Activated CD4-positive, alpha-beta memory T cell treated with anti-CD3 and anti-CD28 coated beads for 36 hours (primary cell): ENCODE measurements at regions of chr1 and their contacts with region 1.

Region 1: GRCh38 chr1:116769561-116769977 is 15.3 kb downstream of the CD2 start:
- DNase-seq: peak; percentile 85
- H3K4me3 Mint-ChIP-seq: peak overlapping the region; percentile 99
- H3K27ac Mint-ChIP-seq: peak overlapping the region; percentile 99
- H3K4me1 Mint-ChIP-seq: peaks cover 95% of the 10 kb centered on the region
- H3K27me3 Mint-ChIP-seq: peaks cover 2% of the 10 kb centered on the region

Region 2: GRCh38 chr1:116472431-116472961 is 297.1 kb before region 1 on chr1:
- CTCF ChIA-PET with region 1: no interaction called
- POLR2A ChIA-PET with region 1: no interaction called
- intact Hi-C with region 1: no loop called
- DNase-seq: no peak
- H3K4me3 Mint-ChIP-seq: no peak overlapping the region
- H3K27ac Mint-ChIP-seq: no peak overlapping the region
- H3K4me1 Mint-ChIP-seq: no peaks in the 10 kb centered on the region
- H3K27me3 Mint-ChIP-seq: no peaks in the 10 kb centered on the region

Region 3: GRCh38 chr1:116498789-116499628 is 270.6 kb before region 1 on chr1:
- CTCF ChIA-PET with region 1: no interaction called
- POLR2A ChIA-PET with region 1: no interaction called
- intact Hi-C with region 1: no loop called
- DNase-seq: peak; percentile 53
- H3K4me3 Mint-ChIP-seq: no peak overlapping the region
- H3K27ac Mint-ChIP-seq: no peak overlapping the region
- H3K4me1 Mint-ChIP-seq: peaks cover 27% of the 10 kb centered on the region
- H3K27me3 Mint-ChIP-seq: no peaks in the 10 kb centered on the region

Region 4: DNA sequence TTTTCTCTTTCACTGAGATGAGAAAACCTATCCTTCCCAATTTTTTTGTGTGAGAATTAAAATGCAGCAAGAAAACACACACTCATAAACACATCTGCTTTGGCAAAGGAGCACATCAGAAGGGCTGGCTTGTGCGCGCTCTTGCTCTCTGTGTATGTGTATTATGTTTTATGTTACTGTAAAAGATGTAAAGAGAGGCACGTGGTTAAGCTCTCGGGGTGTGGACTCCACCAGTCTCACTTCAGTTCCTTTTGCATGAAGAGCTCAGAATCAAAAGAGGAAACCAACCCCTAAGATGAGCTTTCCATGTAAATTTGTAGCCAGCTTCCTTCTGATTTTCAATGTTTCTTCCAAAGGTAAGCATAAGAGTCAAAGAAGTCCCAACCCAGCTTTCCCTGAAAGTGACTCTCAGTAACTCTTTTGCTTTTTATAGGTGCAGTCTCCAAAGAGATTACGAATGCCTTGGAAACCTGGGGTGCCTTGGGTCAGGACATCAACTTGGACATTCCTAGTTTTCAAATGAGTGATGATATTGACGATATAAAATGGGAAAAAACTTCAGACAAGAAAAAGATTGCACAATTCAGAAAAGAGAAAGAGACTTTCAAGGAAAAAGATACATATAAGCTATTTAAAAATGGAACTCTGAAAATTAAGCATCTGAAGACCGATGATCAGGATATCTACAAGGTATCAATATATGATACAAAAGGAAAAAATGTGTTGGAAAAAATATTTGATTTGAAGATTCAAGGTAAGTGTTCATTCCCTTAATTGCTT is 15.2 kb before region 1 on chr1 and contains the start of gene CD2:
- CTCF ChIA-PET with region 1: interaction called, 27 read pairs
- POLR2A ChIA-PET with region 1: interaction called, 629 read pairs
- intact Hi-C with region 1: loop called (anchors 1 kb)
- DNase-seq: peak; percentile 78
- H3K4me3 Mint-ChIP-seq: peak within 1 kb of the TSS; percentile 99
- H3K27ac Mint-ChIP-seq: peak within 1 kb of the TSS; percentile 99
- H3K4me1 Mint-ChIP-seq: peaks cover 40% of the 10 kb centered on the region
- H3K27me3 Mint-ChIP-seq: no peaks in the 10 kb centered on the region
- total RNA-seq, gene CD2: 335 to 355 TPM

Region 5: DNA sequence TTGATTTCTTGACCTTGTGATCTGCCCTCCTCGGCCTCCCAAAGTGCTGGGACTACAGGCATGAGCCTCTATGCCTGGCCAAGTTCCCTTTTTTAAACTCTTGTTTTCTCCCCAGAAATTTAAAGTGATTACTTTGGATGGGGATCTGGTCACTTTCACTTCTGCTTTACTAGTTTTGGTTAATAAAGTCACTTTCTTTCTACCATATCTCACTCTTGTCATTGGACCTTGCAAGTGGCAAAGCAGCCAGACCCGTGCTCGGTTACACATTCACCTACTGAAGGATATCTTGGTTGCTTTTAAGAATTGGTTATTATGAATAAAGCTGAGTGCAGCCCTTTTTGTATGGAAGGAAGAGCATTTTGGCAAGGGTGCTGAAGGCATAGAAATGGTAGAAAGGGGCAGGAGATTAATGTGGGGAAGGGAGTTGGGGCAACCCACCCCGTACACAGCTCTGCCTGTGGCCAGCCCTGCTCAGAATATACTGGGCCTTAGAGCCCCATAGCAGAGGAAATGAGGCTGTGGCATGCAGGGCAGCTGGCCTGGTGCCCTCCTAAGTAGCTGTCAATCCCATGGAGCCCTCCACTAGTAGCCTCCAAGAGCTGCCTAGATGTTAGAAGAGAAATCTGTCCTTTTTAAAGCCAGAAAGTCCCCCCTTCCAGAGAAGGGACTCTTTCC is 25.4 kb after region 1 on chr1:
- CTCF ChIA-PET with region 1: interaction called, 103 read pairs
- POLR2A ChIA-PET with region 1: interaction called, 1,099 read pairs
- intact Hi-C with region 1: no loop called
- DNase-seq: no peak
- H3K4me3 Mint-ChIP-seq: no peak overlapping the region
- H3K27ac Mint-ChIP-seq: peak overlapping the region; percentile 40
- H3K4me1 Mint-ChIP-seq: peaks cover 66% of the 10 kb centered on the region
- H3K27me3 Mint-ChIP-seq: no peaks in the 10 kb centered on the region

Region 6: DNA sequence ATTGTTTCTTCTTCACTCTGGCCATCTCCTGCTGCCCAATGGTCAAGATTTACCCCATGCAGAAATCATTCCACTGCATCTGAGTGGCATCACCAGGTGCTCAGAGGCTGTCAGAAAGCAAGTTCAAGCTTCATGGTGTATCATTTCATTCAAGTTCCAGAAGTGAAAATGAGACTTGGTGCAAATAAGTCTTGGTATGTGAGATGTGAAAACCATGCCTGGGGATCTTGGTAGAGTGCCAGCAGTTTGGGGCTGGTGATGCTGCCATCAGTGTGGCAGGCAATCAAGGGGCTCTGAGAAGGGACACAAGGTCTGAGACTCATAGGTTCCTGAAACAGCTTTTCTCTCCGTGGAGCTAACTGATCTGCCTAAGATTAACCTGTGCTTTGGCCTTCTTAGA is 36.7 kb after region 1 on chr1:
- CTCF ChIA-PET with region 1: interaction called, 103 read pairs
- POLR2A ChIA-PET with region 1: interaction called, 1,099 read pairs
- intact Hi-C with region 1: loop called (anchors 1 kb)
- DNase-seq: peak; percentile 91
- H3K4me3 Mint-ChIP-seq: peak overlapping the region; percentile 79
- H3K27ac Mint-ChIP-seq: peak overlapping the region; percentile 99
- H3K4me1 Mint-ChIP-seq: peaks cover 78% of the 10 kb centered on the region
- H3K27me3 Mint-ChIP-seq: no peaks in the 10 kb centered on the region

Region 7: GRCh38 chr1:116881879-116882520 is 112.4 kb after region 1 on chr1:
- CTCF ChIA-PET with region 1: interaction called, 20 read pairs
- POLR2A ChIA-PET with region 1: interaction called, 14 read pairs
- intact Hi-C with region 1: loop called (anchors 5 kb)
- DNase-seq: peak; percentile 66
- H3K4me3 Mint-ChIP-seq: no peak overlapping the region
- H3K27ac Mint-ChIP-seq: no peak overlapping the region
- H3K4me1 Mint-ChIP-seq: peaks cover 19% of the 10 kb centered on the region
- H3K27me3 Mint-ChIP-seq: no peaks in the 10 kb centered on the region